ENCODE measurements at regions of chr17 and their contacts with region 1.

Region 1: GRCh38 chr17:32461853-32462617 is 17.7 kb downstream of the PSMD11 start:
- DNase-seq: peak; percentile 83
- ATAC-seq: peak; percentile 86
- H3K4me3 Mint-ChIP-seq: no peak overlapping the region
- H3K27ac Mint-ChIP-seq: no peak overlapping the region
- H3K4me1 Mint-ChIP-seq: peaks cover 26% of the 10 kb centered on the region
- H3K27me3 Mint-ChIP-seq: no peaks in the 10 kb centered on the region

Region 2: DNA sequence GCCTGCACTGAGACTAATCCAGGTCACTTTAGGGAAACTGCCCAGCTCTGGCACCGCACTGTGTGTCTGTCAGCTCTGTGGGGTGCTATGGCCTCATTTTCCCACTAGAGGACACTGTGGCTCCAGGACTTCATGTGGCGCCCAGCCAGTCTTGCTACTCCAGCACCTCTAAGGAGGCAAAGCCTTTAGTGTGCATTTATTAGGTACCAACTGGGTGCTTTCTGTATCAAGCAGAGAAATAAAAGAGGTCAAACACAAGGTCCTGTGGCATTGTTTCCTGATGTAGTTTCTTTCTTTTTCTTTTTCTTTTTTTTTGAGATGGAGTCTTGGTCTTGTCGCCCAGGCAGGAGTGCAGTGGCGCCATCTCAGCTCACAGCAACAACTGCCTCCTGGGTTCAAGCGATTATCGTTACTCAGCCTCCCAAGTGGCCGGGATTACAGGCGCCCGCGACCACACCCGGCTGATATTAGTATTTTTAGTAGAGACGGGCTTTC is 208.9 kb before region 1 on chr17:
- CTCF ChIA-PET with region 1: interaction called, 14 read pairs
- POLR2A ChIA-PET with region 1: no interaction called
- DNase-seq: peak; percentile 87
- ATAC-seq: peak; percentile 99
- H3K4me3 Mint-ChIP-seq: no peak overlapping the region
- H3K27ac Mint-ChIP-seq: no peak overlapping the region
- H3K4me1 Mint-ChIP-seq: peaks cover 2% of the 10 kb centered on the region
- H3K27me3 Mint-ChIP-seq: peaks cover 16% of the 10 kb centered on the region

Region 3: GRCh38 chr17:32386844-32387243 is 75.2 kb before region 1 on chr17:
- CTCF ChIA-PET with region 1: no interaction called
- POLR2A ChIA-PET with region 1: no interaction called
- DNase-seq: no peak
- ATAC-seq: no peak
- H3K4me3 Mint-ChIP-seq: no peak overlapping the region
- H3K27ac Mint-ChIP-seq: no peak overlapping the region
- H3K4me1 Mint-ChIP-seq: peaks cover 2% of the 10 kb centered on the region
- H3K27me3 Mint-ChIP-seq: no peaks in the 10 kb centered on the region

Region 4: DNA sequence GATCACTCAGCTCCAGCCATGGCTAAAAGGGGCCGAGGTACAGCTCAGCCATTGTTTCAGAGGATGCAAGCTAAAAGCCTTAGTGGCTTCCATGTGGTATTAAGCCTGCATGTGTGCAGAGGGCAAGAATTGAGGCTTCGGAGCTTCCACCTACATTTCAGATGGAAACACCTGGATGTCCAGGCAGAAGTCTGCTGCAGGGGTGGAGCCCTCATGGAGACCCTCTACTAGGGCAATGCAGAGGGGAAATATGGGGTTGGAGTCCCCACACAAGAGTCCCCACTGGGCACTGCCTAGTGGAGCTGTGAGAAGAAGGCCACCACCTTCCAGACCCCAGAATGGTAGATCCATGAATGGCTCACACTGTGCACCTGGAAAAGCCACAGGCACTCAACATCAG is 32.4 kb before region 1 on chr17:
- CTCF ChIA-PET with region 1: no interaction called
- POLR2A ChIA-PET with region 1: no interaction called
- DNase-seq: no peak
- ATAC-seq: no peak
- H3K4me3 Mint-ChIP-seq: no peak overlapping the region
- H3K27ac Mint-ChIP-seq: no peak overlapping the region
- H3K4me1 Mint-ChIP-seq: no peaks in the 10 kb centered on the region
- H3K27me3 Mint-ChIP-seq: no peaks in the 10 kb centered on the region

Region 5: DNA sequence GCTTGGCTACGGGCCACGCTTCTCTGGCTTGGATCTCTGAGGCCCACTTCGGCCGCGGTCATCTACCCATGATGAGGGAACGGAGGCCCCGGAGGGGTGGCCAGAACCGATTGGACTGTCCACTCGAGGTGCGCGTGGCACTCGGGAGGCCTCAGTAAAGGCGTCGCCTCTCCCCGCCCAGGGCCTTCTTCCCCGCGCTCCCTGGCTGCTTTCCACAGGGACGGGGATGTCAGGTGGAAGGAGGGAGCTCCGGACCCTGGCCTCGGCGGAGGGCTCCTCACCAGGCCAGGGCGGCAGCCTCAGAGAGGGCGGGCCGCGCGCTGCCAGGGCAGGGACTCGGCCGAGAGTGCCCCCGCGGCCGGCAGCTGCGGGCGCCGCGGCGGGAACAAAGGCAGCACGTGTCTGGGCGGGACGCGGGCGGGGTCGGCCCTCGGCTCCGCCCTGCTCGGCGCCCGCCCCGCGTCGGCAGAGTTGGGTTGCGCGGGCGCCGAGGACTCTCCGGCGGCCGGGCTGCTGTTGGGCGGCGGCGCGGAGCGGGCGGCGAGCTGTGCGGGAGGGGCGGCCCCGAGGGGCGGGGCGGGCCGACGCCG is 24.2 kb after region 1 on chr17:
- CTCF ChIA-PET with region 1: interaction called, 87 read pairs
- POLR2A ChIA-PET with region 1: no interaction called
- DNase-seq: peak; percentile 62
- ATAC-seq: peak; percentile 80
- H3K4me3 Mint-ChIP-seq: peak overlapping the region; percentile 62
- H3K27ac Mint-ChIP-seq: peak overlapping the region; percentile 39
- H3K4me1 Mint-ChIP-seq: peaks cover 42% of the 10 kb centered on the region
- H3K27me3 Mint-ChIP-seq: no peaks in the 10 kb centered on the region

Region 6: DNA sequence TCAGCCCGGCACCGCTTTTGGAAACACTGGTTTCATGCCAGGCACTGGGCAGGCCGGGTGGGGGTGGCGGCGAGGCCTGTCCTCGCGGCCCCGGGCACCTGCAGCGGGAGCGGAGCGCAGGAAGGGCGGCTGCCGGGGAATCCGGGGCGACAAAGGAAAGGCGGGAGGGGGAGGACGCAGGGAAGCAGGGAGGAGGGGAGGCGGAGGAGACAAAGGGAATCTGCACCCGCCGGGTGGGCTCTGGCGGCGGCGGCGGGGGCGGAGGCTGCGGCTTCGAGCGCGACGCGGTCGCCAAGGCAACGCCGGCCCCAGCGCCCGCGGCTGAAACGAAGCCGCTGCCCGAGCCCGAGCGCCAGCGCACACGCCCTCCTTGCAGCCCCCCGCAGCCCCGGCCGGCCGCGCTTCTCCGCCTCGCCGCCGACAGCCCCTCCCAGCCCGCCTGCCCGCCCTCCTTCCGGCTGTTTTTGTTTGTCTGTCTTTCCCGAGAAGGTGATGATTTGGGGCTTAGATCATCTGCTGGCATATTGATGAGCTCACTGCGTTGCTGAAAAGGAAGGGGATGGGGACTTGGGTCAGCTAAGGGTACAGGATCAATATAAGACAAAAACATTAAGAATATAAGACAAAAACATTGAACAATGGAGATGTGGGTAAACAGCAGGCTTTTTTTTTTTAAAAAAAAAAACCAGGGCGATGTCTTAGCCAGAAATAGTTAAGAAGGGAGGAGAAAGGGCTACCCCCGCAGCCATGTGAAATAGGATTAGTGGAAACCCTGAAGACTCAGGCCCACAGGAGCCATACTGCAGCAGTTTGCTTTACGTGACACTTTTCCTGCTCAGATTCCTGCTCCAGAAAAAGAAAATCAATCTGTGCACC is 57.4 kb after region 1 on chr17:
- CTCF ChIA-PET with region 1: interaction called, 27 read pairs
- POLR2A ChIA-PET with region 1: no interaction called
- DNase-seq: peak; percentile 70
- ATAC-seq: peak; percentile 45
- H3K4me3 Mint-ChIP-seq: peak overlapping the region; percentile 74
- H3K27ac Mint-ChIP-seq: peak overlapping the region; percentile 87
- H3K4me1 Mint-ChIP-seq: peaks cover 85% of the 10 kb centered on the region
- H3K27me3 Mint-ChIP-seq: no peaks in the 10 kb centered on the region

Region 7: DNA sequence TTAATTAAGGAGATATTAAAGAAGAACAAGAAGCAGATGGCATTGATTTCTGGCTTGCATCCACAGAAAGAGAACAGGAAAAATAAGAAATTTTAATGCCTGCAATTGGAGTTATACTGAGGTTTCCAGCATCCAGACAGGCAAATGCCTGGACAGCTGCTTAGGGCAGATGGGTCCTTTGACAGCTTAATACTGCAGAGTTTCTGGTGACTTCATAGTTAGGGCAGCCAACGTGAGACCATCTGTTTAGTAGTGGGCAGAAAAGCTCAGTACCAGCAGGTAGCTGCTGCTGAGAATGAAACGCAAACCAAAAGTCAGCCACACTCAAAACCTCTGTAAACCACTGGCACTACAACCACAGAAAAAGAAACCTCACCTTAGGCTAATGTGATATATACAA is 134.6 kb after region 1 on chr17:
- CTCF ChIA-PET with region 1: interaction called, 22 read pairs
- POLR2A ChIA-PET with region 1: no interaction called
- DNase-seq: peak; percentile 40
- ATAC-seq: peak; percentile 82
- H3K4me3 Mint-ChIP-seq: no peak overlapping the region
- H3K27ac Mint-ChIP-seq: no peak overlapping the region
- H3K4me1 Mint-ChIP-seq: peaks cover 17% of the 10 kb centered on the region
- H3K27me3 Mint-ChIP-seq: peaks cover 1% of the 10 kb centered on the region

Region 8: GRCh38 chr17:32659419-32659842 is 197.4 kb after region 1 on chr17:
- CTCF ChIA-PET with region 1: interaction called, 16 read pairs
- POLR2A ChIA-PET with region 1: no interaction called
- DNase-seq: peak; percentile 77
- ATAC-seq: peak; percentile 63
- H3K4me3 Mint-ChIP-seq: no peak overlapping the region
- H3K27ac Mint-ChIP-seq: no peak overlapping the region
- H3K4me1 Mint-ChIP-seq: no peaks in the 10 kb centered on the region
- H3K27me3 Mint-ChIP-seq: peaks cover 9% of the 10 kb centered on the region

Measured in activated CD8-positive, alpha-beta T cell treated with anti-CD3 and anti-CD28 coated beads, Interleukin-2, amount 10 ng/mL, durations not matched to agents 7 days and 5 days (primary cell).